AG04450 (cell line): ENCODE measurements at regions of chr4 and their contacts with region 1.

Region 1: DNA sequence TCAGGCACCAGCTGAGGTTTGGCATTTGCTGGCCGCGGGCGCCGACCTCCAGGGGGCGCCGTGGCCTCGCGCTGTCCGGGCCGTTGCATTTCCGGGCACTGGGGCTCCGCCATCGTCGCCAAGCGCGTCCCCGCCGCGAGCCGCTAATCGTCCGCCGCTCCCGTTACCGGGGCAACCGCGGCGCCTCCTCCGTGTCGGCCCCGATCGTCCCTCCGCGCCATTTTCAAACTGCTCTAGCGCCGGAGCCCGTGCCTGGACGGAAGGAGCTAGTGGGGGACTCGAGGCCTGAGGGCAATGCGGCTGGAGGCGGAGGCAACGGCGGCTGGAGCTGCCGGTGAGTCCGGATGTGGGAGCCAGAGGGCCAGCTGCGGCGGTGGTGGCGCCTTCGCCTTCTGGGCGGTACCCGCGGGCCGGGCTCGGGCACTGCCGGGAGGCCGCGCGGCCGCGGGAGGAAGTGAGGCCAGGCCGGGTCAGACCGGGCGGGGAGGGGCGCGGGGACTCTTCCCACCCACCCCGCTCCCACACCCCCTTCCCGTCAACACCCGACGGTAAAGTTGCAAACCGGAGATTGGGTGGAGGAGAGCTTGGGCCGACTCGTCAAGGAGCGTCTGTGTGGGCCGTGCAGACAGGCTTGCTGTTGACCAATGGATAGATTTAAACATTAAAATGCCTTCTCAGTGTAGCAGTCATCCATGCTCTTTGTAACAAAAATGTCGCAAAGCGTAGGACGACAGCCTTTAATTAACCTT is at the start of gene CEP135:
- DNase-seq: peak; percentile 80
- H3K4me3 ChIP-seq: peak within 1 kb of the TSS; percentile 79
- H3K27ac ChIP-seq: peak within 1 kb of the TSS; percentile 99
- H3K27me3 ChIP-seq: no peaks in the 10 kb centered on the region
- CTCF ChIP-seq: peak; percentile 80
- polyA plus RNA-seq, gene CEP135: 3.8 and 6.4 TPM in 2 replicates

Region 2: GRCh38 chr4:55920571-55920970 is 28.3 kb before region 1 on chr4:
- CTCF ChIA-PET with region 1: interaction called, 10 read pairs
- POLR2A ChIA-PET with region 1: no interaction called
- DNase-seq: no peak
- H3K4me3 ChIP-seq: no peak overlapping the region
- H3K27ac ChIP-seq: no peak overlapping the region
- H3K27me3 ChIP-seq: no peaks in the 10 kb centered on the region
- CTCF ChIP-seq: no peak

Region 3: DNA sequence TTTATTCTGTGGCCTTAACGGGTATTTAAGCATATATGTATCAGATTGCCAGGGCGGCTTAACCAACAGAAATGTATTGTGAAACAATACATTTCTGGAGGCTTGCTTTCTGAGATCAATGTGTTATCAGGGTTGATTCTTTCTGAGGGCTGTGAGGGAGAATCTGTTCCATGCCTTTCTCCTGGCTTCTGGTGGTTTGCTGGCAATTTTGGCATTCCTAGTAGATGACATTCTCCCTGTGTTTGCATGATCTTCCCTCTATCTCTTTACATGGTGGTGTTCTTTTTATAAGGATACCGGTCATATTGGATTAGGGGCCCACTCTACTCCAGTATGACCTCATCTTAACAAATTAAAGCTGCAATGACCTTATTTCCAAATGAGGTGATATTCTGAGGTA is 17.1 kb before region 1 on chr4:
- CTCF ChIA-PET with region 1: interaction called, 53 read pairs
- POLR2A ChIA-PET with region 1: interaction called, 5 read pairs
- DNase-seq: peak; percentile 67
- H3K4me3 ChIP-seq: no peak overlapping the region
- H3K27ac ChIP-seq: peak overlapping the region; percentile 34
- H3K27me3 ChIP-seq: no peaks in the 10 kb centered on the region
- CTCF ChIP-seq: no peak

Region 4: DNA sequence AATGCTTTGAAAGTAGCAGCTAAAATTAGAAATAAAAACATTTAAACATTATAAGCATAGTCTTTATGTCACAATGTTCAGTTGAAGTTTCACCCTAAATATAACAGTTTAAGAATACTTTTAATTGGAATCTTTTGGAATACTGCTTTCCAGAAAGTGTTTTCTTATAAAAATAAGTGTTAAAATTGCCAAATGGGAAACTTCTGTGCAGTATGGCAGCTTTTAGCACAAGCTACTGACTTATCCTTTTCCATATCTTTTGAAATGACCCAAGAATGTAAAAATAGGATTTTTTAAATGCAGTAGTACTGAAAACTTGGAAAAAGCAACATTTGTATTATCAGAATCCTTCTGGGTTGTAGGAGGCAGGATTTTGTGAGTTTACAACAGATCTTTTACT is 34.1 kb after region 1 on chr4:
- CTCF ChIA-PET with region 1: interaction called, 11 read pairs
- POLR2A ChIA-PET with region 1: no interaction called
- DNase-seq: no peak
- H3K4me3 ChIP-seq: no peak overlapping the region
- H3K27ac ChIP-seq: no peak overlapping the region
- H3K27me3 ChIP-seq: no peaks in the 10 kb centered on the region
- CTCF ChIP-seq: no peak